H1 (cell line): ENCODE measurements at regions of chr1 and their contacts with region 1.

Region 1: GRCh38 chr1:11320153-11320936 is 47.3 kb downstream of the UBIAD1 start:
- DNase-seq: peak; percentile 41 to 91
- H3K4me3 ChIP-seq: no peak overlapping the region
- H3K27ac ChIP-seq: no peak overlapping the region
- H3K4me1 ChIP-seq: peaks cover 0 to 3% (median 0%) of the 10 kb centered on the region in 4 experiments; a peak in 2 of 7 replicates
- H3K27me3 ChIP-seq: no peaks in the 10 kb centered on the region
- CTCF ChIP-seq: peak; percentile 90 to 95 (median 92)
- EP300 ChIP-seq: no peak
- POLR2A ChIP-seq: no peak
- RAD21 ChIP-seq: peak; percentile 88 to 94

Region 2: DNA sequence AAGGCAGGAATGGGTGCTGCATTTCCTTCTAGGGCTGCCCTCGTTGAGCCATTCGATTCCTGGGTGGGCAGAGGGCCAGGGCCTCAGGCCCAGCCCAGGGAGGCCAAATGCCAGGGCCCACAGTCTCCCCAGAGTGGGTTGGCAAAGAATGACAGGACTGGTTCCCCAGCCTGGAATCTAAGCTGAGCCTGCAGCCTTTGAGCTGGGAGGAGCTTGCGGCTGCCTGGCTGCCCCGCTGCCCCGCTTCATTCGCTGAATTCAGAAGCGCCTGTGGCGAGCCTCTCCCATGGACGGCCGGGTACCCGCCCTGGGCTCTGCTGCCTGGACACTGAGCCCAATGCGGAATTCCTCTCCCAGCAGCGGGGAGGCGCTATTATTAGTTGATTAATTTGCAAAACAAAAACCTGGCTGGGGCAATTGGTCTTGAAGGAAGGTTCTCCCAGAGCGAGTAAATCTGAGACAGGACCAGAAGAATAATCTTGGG is 340.2 kb before region 1 on chr1:
- CTCF ChIA-PET with region 1: no interaction called
- POLR2A ChIA-PET with region 1: no interaction called
- DNase-seq: peak; percentile 80 to 85
- H3K4me3 ChIP-seq: peak overlapping the region in 3 of 4 experiments; percentile 26 to 47 (median 47); a peak in 5 of 8 replicates
- H3K27ac ChIP-seq: peak overlapping the region; percentile 63; the same call in 1 of the 2 replicates
- H3K4me1 ChIP-seq: peaks cover 14 to 20% (median 16%) of the 10 kb centered on the region in 4 experiments
- H3K27me3 ChIP-seq: no peaks in the 10 kb centered on the region
- CTCF ChIP-seq: peak in 2 of 3 experiments; percentile 33 to 45; a peak in 3 of 4 replicates
- EP300 ChIP-seq: 0 out of 3 replicates have a peak, but pooled peaks of 1 of the 2 experiments have one; percentile 52
- POLR2A ChIP-seq: no peak
- RAD21 ChIP-seq: peak in 1 of 2 experiments; percentile 12; a peak in 1 of 4 replicates

Region 3: DNA sequence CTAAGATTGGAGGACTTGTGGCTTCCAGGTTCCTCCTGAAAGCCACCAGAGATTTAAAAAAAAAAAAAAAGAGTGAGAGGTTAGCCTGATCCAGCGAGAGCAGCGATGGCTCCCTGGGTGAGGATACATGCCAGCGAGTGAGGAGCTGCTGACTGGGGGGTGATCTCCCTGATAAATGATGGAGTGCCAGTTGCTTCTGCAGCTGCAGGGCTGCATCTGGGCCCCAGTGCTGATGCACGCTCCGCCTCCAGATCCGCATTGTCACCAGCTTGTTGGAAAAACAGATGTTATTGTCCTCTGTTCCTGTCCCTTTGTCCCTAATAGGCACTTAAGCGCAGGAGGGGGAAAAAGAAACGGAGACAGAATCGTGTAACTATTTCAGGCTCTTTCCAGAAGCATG is 18.7 kb before region 1 on chr1:
- CTCF ChIA-PET with region 1: interaction called, 14 read pairs
- POLR2A ChIA-PET with region 1: interaction called, 4 read pairs
- DNase-seq: no peak
- H3K4me3 ChIP-seq: no peak overlapping the region
- H3K27ac ChIP-seq: no peak overlapping the region
- H3K4me1 ChIP-seq: peaks cover 0 to 10% (median 5%) of the 10 kb centered on the region in 4 experiments; a peak in 6 of 7 replicates
- H3K27me3 ChIP-seq: no peaks in the 10 kb centered on the region
- CTCF ChIP-seq: no peak
- EP300 ChIP-seq: no peak
- POLR2A ChIP-seq: no peak
- RAD21 ChIP-seq: no peak

Region 4: DNA sequence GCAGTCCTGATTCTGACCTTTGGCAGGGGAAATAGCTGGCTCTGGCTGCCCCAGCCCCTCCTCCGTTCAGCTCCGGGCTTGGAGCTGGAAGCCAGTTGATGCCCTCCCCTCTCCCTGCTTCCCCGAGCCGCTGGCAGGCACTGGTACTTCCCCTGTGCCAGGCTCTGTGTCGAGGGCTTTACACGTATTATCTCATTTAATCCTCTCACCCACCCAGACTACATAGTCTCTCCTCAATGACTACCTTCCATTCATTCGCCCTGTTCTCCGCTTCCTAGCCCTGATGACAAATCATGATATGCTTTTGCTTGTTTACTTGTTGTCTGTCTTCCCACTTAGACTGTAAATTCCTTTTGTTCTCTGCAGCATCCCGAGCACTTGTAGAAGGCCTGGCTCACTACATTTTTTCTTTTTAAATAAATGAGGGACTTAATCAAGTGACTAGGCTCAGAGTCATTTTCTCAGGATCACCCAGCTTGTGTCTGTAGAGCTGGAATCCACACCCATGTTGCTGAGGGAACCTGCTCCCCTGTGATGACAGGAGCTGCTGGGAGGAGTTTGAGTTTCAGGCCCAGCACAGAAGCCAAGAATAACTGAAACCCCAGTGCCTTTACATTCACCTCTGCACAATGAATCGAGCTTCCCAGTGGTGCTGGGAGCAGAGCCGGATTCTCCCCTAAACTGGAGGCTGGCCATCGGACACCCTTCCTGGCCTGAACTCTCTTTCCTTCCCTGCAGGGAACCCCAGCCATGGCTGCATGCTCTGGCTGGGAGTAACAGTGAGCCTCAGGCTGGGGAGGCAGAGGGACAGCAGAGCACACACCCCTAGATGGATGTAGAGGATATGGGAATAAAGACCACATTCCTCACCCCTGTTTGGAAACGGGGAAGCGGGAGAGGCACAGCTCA is 10.9 kb after region 1 on chr1:
- CTCF ChIA-PET with region 1: interaction called, 43 read pairs
- POLR2A ChIA-PET with region 1: interaction called, 3 read pairs
- DNase-seq: no peak
- H3K4me3 ChIP-seq: no peak overlapping the region
- H3K27ac ChIP-seq: no peak overlapping the region
- H3K4me1 ChIP-seq: peaks cover 0 to 5% (median 2%) of the 10 kb centered on the region in 4 experiments; a peak in 2 of 7 replicates
- H3K27me3 ChIP-seq: no peaks in the 10 kb centered on the region; a peak in 1 of 7 replicates
- CTCF ChIP-seq: no peak
- EP300 ChIP-seq: no peak
- POLR2A ChIP-seq: no peak
- RAD21 ChIP-seq: no peak

Region 5: DNA sequence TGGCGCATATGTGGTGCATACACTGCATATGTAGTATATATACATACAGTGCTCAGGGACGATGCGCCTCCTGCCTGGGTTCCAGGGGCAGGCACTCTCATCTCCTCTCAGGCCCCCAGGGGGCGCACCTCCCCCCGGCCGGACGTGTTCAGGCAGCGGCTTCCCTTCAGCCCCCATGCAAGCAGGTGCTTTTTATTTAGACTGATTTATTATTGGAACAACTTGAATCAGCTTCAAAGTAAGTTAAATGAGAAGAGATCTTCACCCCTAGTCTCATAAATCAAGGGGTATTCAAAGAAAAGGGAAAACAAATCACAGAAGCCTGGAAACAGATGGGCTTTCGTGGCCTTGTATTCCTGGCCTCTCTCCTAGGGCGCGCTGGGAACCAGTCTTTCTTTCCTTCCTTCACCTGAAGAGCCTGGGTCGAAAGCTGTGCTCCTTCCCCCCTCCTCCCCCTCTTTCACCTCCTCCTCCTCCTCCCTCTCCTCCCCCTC is 17.3 kb after region 1 on chr1:
- CTCF ChIA-PET with region 1: interaction called, 43 read pairs
- POLR2A ChIA-PET with region 1: interaction called, 3 read pairs
- DNase-seq: peak in 1 of 2 experiments; percentile 89
- H3K4me3 ChIP-seq: no peak overlapping the region
- H3K27ac ChIP-seq: no peak overlapping the region
- H3K4me1 ChIP-seq: peaks cover 0 to 16% (median 4%) of the 10 kb centered on the region in 4 experiments; a peak in 4 of 7 replicates
- H3K27me3 ChIP-seq: no peaks in the 10 kb centered on the region
- CTCF ChIP-seq: peak; percentile 81 to 94 (median 91)
- EP300 ChIP-seq: no peak
- POLR2A ChIP-seq: no peak
- RAD21 ChIP-seq: peak; percentile 56 to 69

Region 6: GRCh38 chr1:11342621-11343032 is 22.3 kb after region 1 on chr1:
- CTCF ChIA-PET with region 1: interaction called, 11 read pairs
- POLR2A ChIA-PET with region 1: no interaction called
- DNase-seq: no peak
- H3K4me3 ChIP-seq: no peak overlapping the region
- H3K27ac ChIP-seq: no peak overlapping the region
- H3K4me1 ChIP-seq: peaks cover 0 to 23% (median 9%) of the 10 kb centered on the region in 4 experiments
- H3K27me3 ChIP-seq: no peaks in the 10 kb centered on the region
- CTCF ChIP-seq: no peak
- EP300 ChIP-seq: no peak
- POLR2A ChIP-seq: no peak
- RAD21 ChIP-seq: no peak

Region 7: GRCh38 chr1:11355559-11356475 is 35.5 kb after region 1 on chr1:
- CTCF ChIA-PET with region 1: interaction called, 21 read pairs
- POLR2A ChIA-PET with region 1: no interaction called
- DNase-seq: peak; percentile 61 to 76
- H3K4me3 ChIP-seq: peak overlapping the region; percentile 5 to 47 (median 32); a peak in 7 of 8 replicates
- H3K27ac ChIP-seq: no peak overlapping the region
- H3K4me1 ChIP-seq: peaks cover 8 to 20% (median 12%) of the 10 kb centered on the region in 4 experiments
- H3K27me3 ChIP-seq: no peaks in the 10 kb centered on the region
- CTCF ChIP-seq: no peak
- EP300 ChIP-seq: no peak
- POLR2A ChIP-seq: no peak
- RAD21 ChIP-seq: no peak

Region 8: GRCh38 chr1:11407301-11407994 is 87.1 kb after region 1 on chr1:
- CTCF ChIA-PET with region 1: no interaction called
- POLR2A ChIA-PET with region 1: no interaction called
- DNase-seq: no peak
- H3K4me3 ChIP-seq: no peak overlapping the region
- H3K27ac ChIP-seq: no peak overlapping the region
- H3K4me1 ChIP-seq: peaks cover 0 to under 1% (median 0%) of the 10 kb centered on the region in 4 experiments; a peak in 1 of 7 replicates
- H3K27me3 ChIP-seq: no peaks in the 10 kb centered on the region
- CTCF ChIP-seq: no peak
- EP300 ChIP-seq: no peak
- POLR2A ChIP-seq: no peak
- RAD21 ChIP-seq: no peak